AG04450 (cell line): ENCODE measurements at regions of chr5 and their contacts with region 1.

Region 1: DNA sequence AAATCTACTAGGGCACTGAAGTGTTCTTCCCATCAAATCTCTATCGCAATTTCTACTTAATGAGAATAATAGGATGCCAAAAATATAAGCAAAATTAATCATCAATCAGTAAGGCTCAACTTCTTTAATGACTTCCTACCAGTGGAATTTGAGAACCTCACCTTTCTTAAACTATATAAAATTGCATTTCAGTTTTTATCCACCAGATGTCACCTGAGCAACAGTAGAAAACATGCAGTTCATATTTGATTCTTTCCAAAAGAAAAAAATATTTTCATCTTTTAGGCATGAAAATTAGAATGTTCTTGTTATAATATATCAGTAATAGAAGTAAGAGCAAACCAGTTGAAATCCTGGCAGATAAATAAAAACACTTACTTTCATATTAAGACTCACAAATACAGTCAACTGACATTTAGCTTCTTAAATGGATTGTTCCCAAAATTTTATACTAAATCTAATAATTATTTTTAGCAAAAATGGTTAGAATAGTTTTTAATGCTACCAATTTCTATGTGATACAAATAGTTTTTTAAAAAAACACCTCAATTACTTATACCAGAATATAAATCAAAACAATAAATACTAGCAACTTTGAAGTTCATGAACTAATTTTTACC is 13.4 kb upstream of the CCDC112 start:
- DNase-seq: peak; percentile 7
- H3K4me3 ChIP-seq: no peak overlapping the region
- H3K27ac ChIP-seq: no peak overlapping the region
- H3K27me3 ChIP-seq: no peaks in the 10 kb centered on the region
- CTCF ChIP-seq: peak; percentile 64

Region 2: GRCh38 chr5:115231598-115231997 is 78.3 kb before region 1 on chr5:
- CTCF ChIA-PET with region 1: no interaction called
- POLR2A ChIA-PET with region 1: no interaction called
- DNase-seq: no peak
- H3K4me3 ChIP-seq: no peak overlapping the region
- H3K27ac ChIP-seq: no peak overlapping the region
- H3K27me3 ChIP-seq: no peaks in the 10 kb centered on the region
- CTCF ChIP-seq: no peak

Region 3: GRCh38 chr5:115544436-115545350 is 234.8 kb after region 1 on chr5 and contains the start of gene FEM1C:
- CTCF ChIA-PET with region 1: interaction called, 19 read pairs
- POLR2A ChIA-PET with region 1: interaction called, 3 read pairs
- DNase-seq: peak; percentile 94
- H3K4me3 ChIP-seq: peak within 1 kb of the TSS; percentile 83
- H3K27ac ChIP-seq: peak within 1 kb of the TSS; percentile 80
- H3K27me3 ChIP-seq: no peaks in the 10 kb centered on the region
- CTCF ChIP-seq: no peak
- polyA plus RNA-seq, gene FEM1C: 10.7 and 14.1 TPM in 2 replicates

Region 4: GRCh38 chr5:115568668-115569067 is 258.8 kb after region 1 on chr5:
- CTCF ChIA-PET with region 1: interaction called, 87 read pairs
- POLR2A ChIA-PET with region 1: no interaction called
- DNase-seq: no peak
- H3K4me3 ChIP-seq: no peak overlapping the region
- H3K27ac ChIP-seq: no peak overlapping the region
- H3K27me3 ChIP-seq: no peaks in the 10 kb centered on the region
- CTCF ChIP-seq: no peak

Region 5: DNA sequence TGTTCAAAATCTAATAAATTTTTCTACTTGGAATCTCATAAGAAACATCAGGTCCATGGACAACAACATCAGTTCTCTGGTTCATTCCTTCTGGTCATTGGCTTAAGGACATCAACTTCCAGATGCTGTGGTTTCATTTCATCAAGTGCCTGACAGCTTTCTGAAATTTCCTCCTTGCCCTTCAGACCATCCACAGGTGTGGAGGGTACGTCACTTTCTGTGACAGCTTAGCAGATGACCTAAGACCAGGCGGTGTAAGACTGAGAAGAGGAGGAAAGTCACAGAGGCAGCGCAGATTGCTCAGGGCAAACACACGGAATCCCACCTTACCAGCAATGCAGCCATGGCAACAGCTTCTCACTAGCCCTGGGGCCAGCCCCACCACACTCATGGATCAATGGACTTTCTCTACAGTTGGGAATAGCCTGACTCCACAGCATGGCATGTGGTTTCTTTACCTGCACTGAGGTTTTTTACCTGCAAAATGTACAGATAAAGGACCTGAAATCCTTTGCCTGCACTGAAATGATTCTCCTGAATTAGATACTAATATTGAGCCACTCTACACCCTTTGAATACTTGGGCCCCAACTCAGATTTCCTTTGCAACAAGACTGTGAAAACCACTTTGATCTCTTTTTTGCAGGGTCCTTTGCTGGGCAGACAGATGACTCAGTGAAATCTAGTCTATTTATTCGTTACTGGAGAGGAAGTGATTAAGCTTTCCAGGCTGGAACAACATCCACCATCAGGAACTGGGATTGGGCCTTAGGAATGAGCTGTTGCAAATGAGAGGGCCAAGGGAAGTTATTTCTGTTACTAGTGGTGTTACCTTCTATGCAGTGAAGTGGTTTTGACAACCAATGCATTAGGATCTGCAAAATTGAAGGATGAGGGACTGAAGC is 265.6 kb after region 1 on chr5:
- CTCF ChIA-PET with region 1: interaction called, 87 read pairs
- POLR2A ChIA-PET with region 1: no interaction called
- DNase-seq: peak; percentile 42
- H3K4me3 ChIP-seq: no peak overlapping the region
- H3K27ac ChIP-seq: no peak overlapping the region
- H3K27me3 ChIP-seq: no peaks in the 10 kb centered on the region
- CTCF ChIP-seq: no peak

Region 6: GRCh38 chr5:115583474-115583873 is 273.6 kb after region 1 on chr5:
- CTCF ChIA-PET with region 1: interaction called, 61 read pairs
- POLR2A ChIA-PET with region 1: no interaction called
- DNase-seq: peak; percentile 69
- H3K4me3 ChIP-seq: no peak overlapping the region
- H3K27ac ChIP-seq: peak overlapping the region; percentile 65
- H3K27me3 ChIP-seq: no peaks in the 10 kb centered on the region
- CTCF ChIP-seq: no peak

Region 7: GRCh38 chr5:115588640-115589039 is 278.8 kb after region 1 on chr5:
- CTCF ChIA-PET with region 1: interaction called, 61 read pairs
- POLR2A ChIA-PET with region 1: no interaction called
- DNase-seq: no peak
- H3K4me3 ChIP-seq: no peak overlapping the region
- H3K27ac ChIP-seq: no peak overlapping the region
- H3K27me3 ChIP-seq: no peaks in the 10 kb centered on the region
- CTCF ChIP-seq: no peak

Region 8: GRCh38 chr5:115625579-115626444 is 316.0 kb after region 1 on chr5 and contains the start of gene TMED7:
- CTCF ChIA-PET with region 1: interaction called, 26 read pairs
- POLR2A ChIA-PET with region 1: no interaction called
- DNase-seq: peak; percentile 95
- H3K4me3 ChIP-seq: peak within 1 kb of the TSS; percentile 89
- H3K27ac ChIP-seq: peak within 1 kb of the TSS; percentile 88
- H3K27me3 ChIP-seq: no peaks in the 10 kb centered on the region
- CTCF ChIP-seq: no peak
- polyA plus RNA-seq, gene TMED7: 74.2 and 110 TPM in 2 replicates